Activated CD8-positive, alpha-beta memory T cell treated with anti-CD3 and anti-CD28 coated beads, Interleukin-2, amount 10 ng/mL, durations not matched to agents 7 days and 5 days (primary cell): ENCODE measurements at regions of chr10 and their contacts with region 1.

Region 1: GRCh38 chr10:102167861-102168260 is 15.7 kb downstream of the NOLC1 start:
- DNase-seq: no peak
- ATAC-seq: no peak
- H3K4me3 Mint-ChIP-seq: no peak overlapping the region
- H3K27ac Mint-ChIP-seq: no peak overlapping the region
- H3K4me1 Mint-ChIP-seq: peaks cover 15% of the 10 kb centered on the region
- H3K27me3 Mint-ChIP-seq: no peaks in the 10 kb centered on the region

Region 2: GRCh38 chr10:102090772-102091171 is 77.1 kb before region 1 on chr10:
- CTCF ChIA-PET with region 1: no interaction called
- DNase-seq: no peak
- ATAC-seq: no peak
- H3K4me3 Mint-ChIP-seq: no peak overlapping the region
- H3K27ac Mint-ChIP-seq: no peak overlapping the region
- H3K4me1 Mint-ChIP-seq: no peaks in the 10 kb centered on the region
- H3K27me3 Mint-ChIP-seq: no peaks in the 10 kb centered on the region

Region 3: GRCh38 chr10:102151774-102152544 is 15.9 kb before region 1 on chr10 and contains the start of gene NOLC1:
- CTCF ChIA-PET with region 1: interaction called, 40 read pairs
- DNase-seq: peak; percentile 100
- ATAC-seq: peak; percentile 96
- H3K4me3 Mint-ChIP-seq: peak within 1 kb of the TSS; percentile 96
- H3K27ac Mint-ChIP-seq: peak within 1 kb of the TSS; percentile 90
- H3K4me1 Mint-ChIP-seq: peaks cover 45% of the 10 kb centered on the region
- H3K27me3 Mint-ChIP-seq: no peaks in the 10 kb centered on the region
- total RNA-seq, gene NOLC1: 107 to 149 TPM

Region 4: DNA sequence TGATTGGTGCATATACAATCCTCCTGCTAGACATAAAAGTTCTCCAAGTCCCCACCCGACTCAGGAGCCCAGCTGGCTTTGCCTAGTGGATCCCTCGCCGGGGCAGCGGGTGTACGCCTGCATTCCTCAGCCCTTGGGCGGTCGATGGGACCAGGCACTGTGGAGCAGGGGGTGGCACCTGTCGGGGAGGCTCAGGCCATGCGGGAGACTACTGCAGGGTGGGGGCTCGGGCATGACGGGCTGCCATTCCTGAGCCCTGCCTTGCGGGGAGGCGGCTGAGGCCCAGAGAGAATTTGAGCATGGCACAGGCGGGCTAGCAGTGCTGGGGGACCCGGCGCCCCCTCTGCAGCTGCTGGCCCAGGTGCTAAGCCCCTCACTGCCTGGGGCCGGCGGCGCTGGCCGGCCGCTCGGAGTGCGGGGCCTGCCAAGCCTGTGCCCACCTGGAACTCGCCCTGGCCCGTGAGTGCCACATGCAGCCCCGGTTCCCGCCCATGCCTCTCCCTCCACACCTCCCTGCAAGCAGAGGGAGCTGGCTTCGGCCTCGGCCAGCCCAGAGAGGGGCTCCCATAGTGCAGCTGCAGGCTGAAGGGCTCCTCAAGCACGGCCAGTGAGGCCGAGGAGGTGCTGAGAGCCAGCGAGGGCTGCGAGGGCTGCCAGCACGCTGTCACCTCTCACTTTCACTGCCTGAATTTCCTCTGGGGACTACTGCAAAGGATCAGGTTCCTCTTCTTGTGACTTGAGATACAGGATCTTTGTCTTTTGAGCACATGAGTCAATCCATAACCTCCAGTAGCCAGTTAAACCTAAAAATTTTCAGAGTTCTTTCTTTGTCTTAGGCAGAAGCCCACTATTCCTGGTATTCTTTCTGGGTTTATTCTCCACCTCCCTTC is 33.1 kb after region 1 on chr10:
- CTCF ChIA-PET with region 1: interaction called, 13 read pairs
- DNase-seq: no peak
- ATAC-seq: no peak
- H3K4me3 Mint-ChIP-seq: no peak overlapping the region
- H3K27ac Mint-ChIP-seq: no peak overlapping the region
- H3K4me1 Mint-ChIP-seq: peaks cover 7% of the 10 kb centered on the region
- H3K27me3 Mint-ChIP-seq: peaks cover 13% of the 10 kb centered on the region

Region 5: GRCh38 chr10:102358712-102359382 is 191.0 kb after region 1 on chr10:
- CTCF ChIA-PET with region 1: interaction called, 92 read pairs
- DNase-seq: peak; percentile 43
- ATAC-seq: peak; percentile 63
- H3K4me3 Mint-ChIP-seq: no peak overlapping the region
- H3K27ac Mint-ChIP-seq: no peak overlapping the region
- H3K4me1 Mint-ChIP-seq: peaks cover 25% of the 10 kb centered on the region
- H3K27me3 Mint-ChIP-seq: no peaks in the 10 kb centered on the region